Activated T-helper 1 cell treated with anti-CD3 and anti-CD28 coated beads, Interleukin-12 subunit alpha, Interleukin-12 subunit beta, Interleukin-2, Interleukin-4 antibody, amounts not matched to agents 30 ng/mL and 10 ng/mL and 1 ng/mL, durations not matched to agents 14 hours and 24 hours and 36 hours (primary cell): ENCODE measurements at regions of chr2 and their contacts with region 1.

Region 1: GRCh38 chr2:206693399-206694137 is 24.6 kb downstream of the DYTN start:
- DNase-seq: peak; percentile 2
- H3K4me3 Mint-ChIP-seq: no peak overlapping the region
- H3K27ac Mint-ChIP-seq: no peak overlapping the region
- H3K4me1 Mint-ChIP-seq: no peaks in the 10 kb centered on the region
- H3K27me3 Mint-ChIP-seq: peaks cover 2% of the 10 kb centered on the region

Region 2: DNA sequence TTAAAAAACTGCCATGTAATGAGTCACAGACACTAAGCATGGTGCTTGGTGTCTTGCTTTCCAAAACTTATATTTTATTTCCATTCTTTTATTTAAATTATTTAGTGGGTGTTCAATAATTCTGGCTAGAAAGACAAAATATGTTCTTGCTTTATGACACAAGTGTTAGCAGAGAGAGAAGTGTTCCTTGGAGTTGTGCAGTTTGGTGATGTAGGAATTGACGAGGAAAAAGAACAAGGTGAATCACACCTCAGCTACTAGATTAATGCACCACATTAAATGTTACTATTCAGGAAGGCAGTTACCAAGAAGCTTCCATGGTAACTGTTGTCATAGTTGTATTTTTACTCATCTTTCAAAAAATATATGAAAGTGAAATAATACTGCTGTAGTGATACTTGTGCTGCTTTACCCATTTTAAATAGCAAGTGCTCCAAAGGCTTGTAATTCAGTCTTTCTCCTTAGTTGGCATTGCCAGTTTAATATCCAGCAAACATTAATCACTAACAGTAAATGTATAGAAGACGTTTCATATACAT is 222.0 kb before region 1 on chr2:
- intact Hi-C with region 1: no loop called
- DNase-seq: no peak
- H3K4me3 Mint-ChIP-seq: no peak overlapping the region
- H3K27ac Mint-ChIP-seq: no peak overlapping the region
- H3K4me1 Mint-ChIP-seq: no peaks in the 10 kb centered on the region
- H3K27me3 Mint-ChIP-seq: peaks cover 4% of the 10 kb centered on the region

Region 3: DNA sequence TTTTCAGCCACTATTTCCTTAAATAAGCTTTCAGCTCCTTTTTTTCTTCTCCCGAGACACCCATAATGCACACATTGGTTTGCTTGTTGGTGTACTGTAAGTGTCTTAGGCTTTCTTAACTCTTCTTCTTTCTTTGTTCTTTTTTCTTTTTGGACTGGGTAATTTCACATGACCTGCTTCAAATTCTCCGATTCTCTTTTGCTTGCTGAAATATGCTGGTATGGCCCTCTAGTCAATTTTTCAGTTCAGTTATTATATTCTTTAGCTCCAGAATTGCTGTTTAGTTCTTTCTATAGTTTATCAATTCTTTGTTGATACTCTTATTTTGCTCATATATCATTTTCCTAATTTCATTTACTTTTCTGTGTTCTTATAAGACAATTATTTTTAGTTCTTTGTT is 87.1 kb after region 1 on chr2:
- intact Hi-C with region 1: loop called (anchors 1 kb)
- DNase-seq: no peak
- H3K4me3 Mint-ChIP-seq: no peak overlapping the region
- H3K27ac Mint-ChIP-seq: no peak overlapping the region
- H3K4me1 Mint-ChIP-seq: no peaks in the 10 kb centered on the region
- H3K27me3 Mint-ChIP-seq: no peaks in the 10 kb centered on the region

Region 4: DNA sequence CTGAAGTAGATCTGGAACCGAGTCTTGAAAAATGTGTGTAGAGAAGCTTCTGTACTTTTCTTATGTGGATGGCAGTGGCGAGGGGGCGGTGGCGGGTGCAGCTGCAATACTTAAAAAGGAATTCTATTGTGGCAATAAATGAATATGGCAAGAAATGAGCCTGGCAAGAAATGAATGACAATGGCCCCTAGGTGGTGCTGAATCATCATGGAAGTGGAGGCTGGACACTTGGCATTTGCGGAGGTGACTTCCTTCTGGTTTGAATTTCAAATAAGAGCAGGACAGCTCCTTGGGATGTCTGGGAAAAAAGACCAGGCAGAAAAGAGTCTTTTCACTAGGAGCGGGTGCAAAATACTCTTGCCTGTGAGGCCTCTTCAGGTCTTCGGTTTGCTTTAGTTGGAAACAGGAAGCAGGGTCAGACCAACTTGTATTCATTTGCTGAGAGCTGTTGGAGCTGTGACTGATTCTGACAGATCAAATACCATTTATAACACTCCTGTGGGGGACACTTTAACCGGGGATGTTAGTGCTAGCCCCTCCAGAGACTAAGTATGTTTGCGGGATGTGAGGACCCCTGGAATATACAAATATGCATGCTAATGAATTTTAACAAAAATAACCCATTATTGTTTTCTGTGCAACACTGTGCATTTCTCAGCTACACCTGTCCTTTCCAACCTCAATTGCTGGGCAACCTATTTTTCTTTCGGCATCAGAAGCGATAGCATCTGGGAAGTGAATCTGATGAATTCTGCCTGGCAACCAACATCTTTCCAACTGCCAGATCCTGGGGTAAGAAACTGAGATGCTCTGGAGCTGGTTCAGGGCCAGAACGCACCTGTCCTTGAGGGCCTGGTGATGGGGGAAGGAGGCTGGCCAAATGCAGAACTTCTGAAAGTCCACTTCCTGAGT is 107.2 kb after region 1 on chr2:
- intact Hi-C with region 1: loop called (anchors 5 kb)
- DNase-seq: peak; percentile 28
- H3K4me3 Mint-ChIP-seq: peak overlapping the region; percentile 49
- H3K27ac Mint-ChIP-seq: peak overlapping the region; percentile 61
- H3K4me1 Mint-ChIP-seq: peaks cover 20% of the 10 kb centered on the region
- H3K27me3 Mint-ChIP-seq: no peaks in the 10 kb centered on the region

Region 5: GRCh38 chr2:206981739-206982340 is 288.3 kb after region 1 on chr2:
- intact Hi-C with region 1: loop called (anchors 5 kb)
- DNase-seq: peak; percentile 9
- H3K4me3 Mint-ChIP-seq: no peak overlapping the region
- H3K27ac Mint-ChIP-seq: no peak overlapping the region
- H3K4me1 Mint-ChIP-seq: peaks cover 13% of the 10 kb centered on the region
- H3K27me3 Mint-ChIP-seq: no peaks in the 10 kb centered on the region

Region 6: DNA sequence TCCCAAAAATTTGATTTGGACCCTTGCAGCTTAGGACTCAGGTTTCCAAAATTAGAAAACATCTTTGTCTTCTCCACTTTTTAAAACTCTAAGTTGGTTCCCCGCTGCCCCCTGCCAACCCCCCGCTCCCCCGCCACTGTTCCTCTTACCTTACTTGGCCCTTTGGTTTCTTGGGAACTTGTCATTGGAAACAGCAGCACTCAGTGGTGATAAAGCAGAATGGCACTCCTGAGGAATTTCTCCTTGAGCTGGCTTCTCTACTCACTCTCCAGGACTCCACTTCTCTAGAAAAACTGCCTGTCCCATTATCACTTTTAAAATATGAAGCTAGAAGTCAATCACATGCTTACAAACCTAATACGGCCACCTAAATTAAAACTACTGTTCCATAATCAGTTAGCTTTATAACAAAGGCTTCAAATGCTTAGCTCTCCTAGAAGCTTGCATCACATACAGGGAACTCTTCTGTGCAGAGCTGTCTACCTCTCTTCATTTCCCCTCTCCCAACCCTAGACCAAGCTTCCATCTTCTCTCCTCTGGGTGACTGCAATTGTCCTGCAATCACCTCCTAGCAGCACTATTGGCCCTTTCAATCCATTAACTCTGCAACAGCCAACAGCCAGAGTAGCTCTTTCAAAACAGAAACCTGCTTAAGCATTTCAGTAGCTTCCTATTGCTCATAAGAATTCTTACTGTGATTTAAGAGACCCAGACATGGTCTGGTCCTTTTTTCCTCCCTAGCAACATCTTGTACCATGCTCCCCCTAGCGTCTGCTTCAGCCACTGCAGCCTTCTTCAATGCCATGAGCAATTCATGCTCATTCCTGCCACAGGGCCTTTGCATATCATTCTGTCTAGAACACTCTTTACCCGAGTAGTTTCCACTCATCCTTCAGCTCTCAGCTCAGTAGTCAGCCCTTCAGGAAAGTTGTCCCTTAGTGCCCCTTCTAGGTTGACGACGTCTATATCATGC is 1346.9 kb after region 1 on chr2:
- intact Hi-C with region 1: loop called (anchors 1 kb)
- DNase-seq: peak; percentile 56
- H3K4me3 Mint-ChIP-seq: no peak overlapping the region
- H3K27ac Mint-ChIP-seq: no peak overlapping the region
- H3K4me1 Mint-ChIP-seq: no peaks in the 10 kb centered on the region
- H3K27me3 Mint-ChIP-seq: peaks cover 4% of the 10 kb centered on the region

Region 7: DNA sequence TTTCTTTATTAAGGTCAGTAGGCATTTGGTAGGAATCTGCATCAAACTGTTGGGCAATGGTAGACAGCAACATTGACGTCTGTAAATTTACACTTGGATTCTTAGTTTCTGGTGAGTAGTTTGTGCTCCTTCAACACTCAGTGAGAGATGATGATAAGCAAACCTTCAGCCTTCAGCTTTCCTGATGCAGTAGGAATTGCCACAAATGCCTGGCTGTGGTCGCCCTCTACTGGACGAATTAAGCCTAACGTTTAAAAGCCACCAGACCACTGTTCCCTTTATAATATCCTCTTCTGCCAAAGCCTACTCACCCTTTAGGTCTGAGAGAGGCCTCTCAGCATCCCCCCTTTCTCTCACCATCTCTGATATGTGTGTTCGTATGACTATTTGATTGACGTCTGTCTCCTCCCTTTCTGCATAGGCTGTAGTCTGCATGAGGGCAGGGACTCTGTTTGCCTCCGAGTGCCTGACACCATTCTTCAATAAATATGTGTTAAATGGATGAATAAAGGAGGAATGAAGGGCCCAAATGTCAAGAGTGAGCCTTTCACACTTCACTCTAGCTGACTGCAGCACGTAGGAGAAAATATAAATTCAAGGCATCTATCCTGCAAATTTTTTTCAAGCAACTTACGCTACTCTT is 1378.8 kb after region 1 on chr2:
- intact Hi-C with region 1: loop called (anchors 1 kb)
- DNase-seq: peak; percentile 19
- H3K4me3 Mint-ChIP-seq: no peak overlapping the region
- H3K27ac Mint-ChIP-seq: no peak overlapping the region
- H3K4me1 Mint-ChIP-seq: no peaks in the 10 kb centered on the region
- H3K27me3 Mint-ChIP-seq: peaks cover 5% of the 10 kb centered on the region